Head of caudate nucleus (tissue), 42 donors: ENCODE measurements at regions of chr4 and their contacts with region 1.

Region 1: DNA sequence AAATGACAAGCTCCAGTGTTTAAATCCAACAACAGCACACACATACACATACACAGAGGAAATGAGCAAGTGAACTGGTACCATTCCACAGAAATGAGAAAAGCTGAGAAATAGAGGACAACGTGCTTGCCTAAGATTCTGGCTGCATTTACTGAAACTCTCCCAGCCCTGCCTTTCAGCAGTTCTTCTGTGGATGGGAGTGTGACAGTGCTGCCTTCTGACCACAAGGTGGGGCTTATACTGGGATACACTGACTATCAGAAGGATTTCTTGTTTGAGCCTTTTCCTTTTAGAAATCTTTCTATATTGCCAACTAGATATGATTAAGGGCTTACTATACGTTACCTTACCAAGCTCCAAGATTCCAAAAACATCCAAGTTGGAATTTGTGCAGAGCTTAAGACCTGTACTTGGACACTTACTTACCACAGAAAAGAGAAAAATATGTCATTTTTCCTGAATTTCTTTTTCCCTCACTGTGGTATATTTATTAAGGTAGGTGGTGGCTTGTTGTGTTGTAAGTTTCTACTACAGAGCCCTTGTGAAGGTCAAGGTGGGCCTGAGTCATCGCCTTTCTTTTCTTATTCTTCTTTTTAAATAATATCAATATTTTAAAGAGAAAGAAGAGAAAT is 10.7 kb upstream of the CXCL8 start:
- DNase-seq: peak; percentile 18 to 85 (median 64)

Region 2: GRCh38 chr4:72919937-72920336 is 809.7 kb before region 1 on chr4:
- intact Hi-C with region 1: no loop called
- DNase-seq: no peak

Region 3: GRCh38 chr4:74133786-74134499 is 404.3 kb after region 1 on chr4:
- intact Hi-C with region 1: loop called (anchors 10 kb)
- DNase-seq: peak in 41 of 42 donors; percentile 53 to 89 (median 74)